ENCODE measurements at regions of chr12 and their contacts with region 1.

Region 1: GRCh38 chr12:1795785-1796514 is 24.4 kb upstream of the LRTM2 start:
- DNase-seq: peak; percentile 69
- H3K4me3 ChIP-seq: peak overlapping the region; percentile 52 to 82 (median 74)
- H3K27ac ChIP-seq: peak overlapping the region; percentile 82 to 91 (median 89)
- H3K4me1 ChIP-seq: peaks cover 9 to 46% (median 12%) of the 10 kb centered on the region in 3 donors
- H3K27me3 ChIP-seq: no peaks in the 10 kb centered on the region
- CTCF ChIP-seq: peak; percentile 98 to 100 (median 100)
- POLR2A ChIP-seq: peak in 2 of 4 donors; percentile 42 to 79

Region 2: DNA sequence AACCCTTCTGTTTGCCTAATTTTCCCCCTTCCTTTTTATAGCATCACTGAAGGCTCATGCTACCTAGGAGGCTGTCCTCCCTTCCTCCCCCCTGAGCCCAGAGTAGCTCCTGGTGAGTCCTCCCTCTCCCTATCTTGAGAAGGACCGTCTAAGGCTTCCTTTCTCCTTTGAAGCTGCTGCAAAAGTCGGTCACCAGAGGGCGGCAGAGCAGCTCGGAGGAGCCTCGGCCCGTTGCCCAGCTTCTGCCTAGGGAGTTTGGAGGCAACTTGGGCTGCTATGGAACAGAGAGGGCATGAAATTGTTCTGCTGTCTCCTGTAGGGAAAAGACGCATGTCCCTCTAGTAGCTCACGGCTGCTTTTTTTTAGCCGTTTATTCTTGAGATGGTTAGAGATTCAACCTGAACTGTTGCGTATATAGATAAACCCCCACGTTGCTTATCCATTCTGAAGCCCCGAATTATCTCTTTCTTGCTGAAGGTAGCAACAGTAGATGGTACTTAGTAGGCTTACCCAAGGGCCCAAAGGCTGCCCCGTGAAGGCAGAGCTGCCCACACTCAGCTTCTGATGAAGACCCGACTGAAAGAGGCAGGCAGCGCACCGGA is 161.3 kb before region 1 on chr12:
- intact Hi-C with region 1: loop called (anchors 5 kb)
- DNase-seq: no peak
- H3K4me3 ChIP-seq: no peak overlapping the region
- H3K27ac ChIP-seq: peak overlapping the region in 2 of 4 donors; percentile 13 to 50
- H3K4me1 ChIP-seq: peaks cover 6 to 55% (median 14%) of the 10 kb centered on the region in 3 donors
- H3K27me3 ChIP-seq: peaks cover 0 to 21% (median 0%) of the 10 kb centered on the region in 4 donors
- CTCF ChIP-seq: peak; percentile 30 to 88 (median 78)
- POLR2A ChIP-seq: no peak

Region 3: DNA sequence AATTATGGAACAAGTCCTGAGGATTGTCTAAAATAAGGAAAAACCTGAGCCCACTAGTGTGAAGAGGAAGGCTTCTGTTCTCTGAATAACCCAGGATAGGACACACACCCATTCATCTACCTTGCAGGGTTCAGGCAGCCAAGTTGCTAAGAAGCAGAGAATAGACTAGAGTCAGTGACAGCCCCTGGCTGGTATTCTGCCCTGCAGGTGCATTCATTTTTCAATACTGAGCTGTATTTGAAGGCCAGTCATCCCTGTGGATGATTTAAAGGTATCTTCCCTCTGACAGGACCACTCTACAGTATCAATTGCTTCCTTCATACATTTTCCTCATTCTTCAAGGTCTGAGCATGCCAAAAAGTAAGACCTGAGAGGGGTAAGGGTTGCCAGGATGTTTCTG is 144.0 kb before region 1 on chr12:
- intact Hi-C with region 1: loop called (anchors 2 kb)
- DNase-seq: no peak
- H3K4me3 ChIP-seq: no peak overlapping the region
- H3K27ac ChIP-seq: peak overlapping the region in 2 of 4 donors; percentile 37 to 58
- H3K4me1 ChIP-seq: peaks cover 4 to 66% (median 8%) of the 10 kb centered on the region in 3 donors
- H3K27me3 ChIP-seq: no peaks in the 10 kb centered on the region
- CTCF ChIP-seq: no peak
- POLR2A ChIP-seq: no peak

Region 4: GRCh38 chr12:1939801-1940607 is 144.1 kb after region 1 on chr12:
- intact Hi-C with region 1: loop called (anchors 5 kb)
- DNase-seq: no peak
- H3K4me3 ChIP-seq: peak overlapping the region in 1 of 4 donors; percentile 13
- H3K27ac ChIP-seq: peak overlapping the region in 3 of 4 donors; percentile 4 to 57 (median 47)
- H3K4me1 ChIP-seq: peaks cover 5 to 23% (median 7%) of the 10 kb centered on the region in 3 donors
- H3K27me3 ChIP-seq: no peaks in the 10 kb centered on the region
- CTCF ChIP-seq: peak; percentile 84 to 98 (median 96)
- POLR2A ChIP-seq: no peak

Region 5: DNA sequence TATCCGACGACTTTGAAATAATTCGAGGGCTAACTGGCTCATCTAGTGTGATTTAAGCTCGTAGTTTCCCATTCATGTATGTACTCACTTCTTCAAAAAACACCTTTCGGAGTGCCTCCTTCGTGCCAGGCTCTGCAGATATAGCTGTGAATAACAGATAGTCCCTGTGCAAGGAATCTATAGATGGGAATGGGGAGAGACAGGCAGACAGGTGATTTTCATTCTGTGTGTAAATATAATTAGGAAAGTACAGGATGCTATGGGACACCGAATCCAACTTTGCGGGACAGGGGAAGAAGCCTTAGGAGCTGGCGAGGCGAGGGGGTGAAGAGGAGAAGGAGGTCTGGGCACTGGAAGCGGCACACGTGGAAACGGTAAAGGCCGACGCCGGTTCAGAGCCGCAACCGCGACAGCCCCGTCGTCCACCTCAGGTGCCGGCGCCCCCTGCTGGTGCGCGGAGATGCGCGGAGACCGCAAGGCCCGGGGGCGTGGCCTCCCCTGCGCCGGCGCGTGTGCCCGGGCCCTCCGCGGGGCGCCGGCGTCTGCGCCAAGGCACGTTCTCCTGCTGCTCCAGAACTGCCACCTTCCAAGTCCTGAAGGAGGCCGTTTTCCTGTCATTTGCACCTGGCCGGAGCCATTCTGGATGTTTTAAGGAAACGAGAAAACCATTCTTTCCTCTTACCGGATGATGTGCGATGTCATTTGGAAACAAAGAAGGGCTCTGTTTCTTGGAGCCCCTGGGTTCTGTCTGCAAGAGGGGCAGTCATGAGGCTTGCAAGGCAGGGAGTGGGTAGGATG is 238.9 kb after region 1 on chr12:
- intact Hi-C with region 1: loop called (anchors 5 kb)
- DNase-seq: peak; percentile 34
- H3K4me3 ChIP-seq: peak overlapping the region in 3 of 4 donors; percentile 22 to 57 (median 31)
- H3K27ac ChIP-seq: no peak overlapping the region
- H3K4me1 ChIP-seq: peaks cover 5 to 13% (median 12%) of the 10 kb centered on the region in 3 donors
- H3K27me3 ChIP-seq: peaks cover 0 to 35% (median 0%) of the 10 kb centered on the region in 4 donors
- CTCF ChIP-seq: peak; percentile 88 to 97 (median 93)
- POLR2A ChIP-seq: no peak

Measured in esophagus squamous epithelium (tissue), 5 donors.